ENCODE measurements at regions of chr2 and their contacts with region 1.

Region 1: GRCh38 chr2:226040344-226040900 is 640.9 kb downstream of the NYAP2 start:
- DNase-seq: no peak
- H3K4me3 ChIP-seq: no peak overlapping the region
- H3K27ac ChIP-seq: no peak overlapping the region
- H3K4me1 ChIP-seq: no peaks in the 10 kb centered on the region
- H3K27me3 ChIP-seq: no peaks in the 10 kb centered on the region
- CTCF ChIP-seq: no peak

Region 2: GRCh38 chr2:226185616-226186211 is 145.3 kb after region 1 on chr2:
- CTCF ChIA-PET with region 1: no interaction called
- dilution Hi-C with region 1: no loop called
- in situ Hi-C with region 1: no loop called
- intact Hi-C with region 1: loop called (anchors 1 kb)
- DNase-seq: peak; percentile 83
- H3K4me3 ChIP-seq: no peak overlapping the region
- H3K27ac ChIP-seq: peak overlapping the region; percentile 99
- H3K4me1 ChIP-seq: peaks cover 15% of the 10 kb centered on the region
- H3K27me3 ChIP-seq: no peaks in the 10 kb centered on the region
- CTCF ChIP-seq: no peak

Measured in mammary epithelial cell (primary cell).